H1 (cell line): ENCODE measurements at regions of chr15 and their contacts with region 1.

Region 1: GRCh38 chr15:101641166-101641764 is 10.9 kb downstream of the TM2D3 start:
- DNase-seq: peak in 1 of 2 experiments; percentile 85
- H3K4me3 ChIP-seq: no peak overlapping the region
- H3K27ac ChIP-seq: no peak overlapping the region
- H3K4me1 ChIP-seq: no peaks in the 10 kb centered on the region
- H3K27me3 ChIP-seq: no peaks in the 10 kb centered on the region
- CTCF ChIP-seq: peak in 2 of 3 experiments; percentile 75 to 79; a peak in 3 of 4 replicates
- EP300 ChIP-seq: no peak
- POLR2A ChIP-seq: no peak
- RAD21 ChIP-seq: peak; percentile 89 to 92

Region 2: GRCh38 chr15:101283931-101284330 is 357.3 kb before region 1 on chr15:
- CTCF ChIA-PET with region 1: interaction called, 18 read pairs
- POLR2A ChIA-PET with region 1: interaction called, 3 read pairs
- DNase-seq: no peak
- H3K4me3 ChIP-seq: no peak overlapping the region
- H3K27ac ChIP-seq: no peak overlapping the region
- H3K4me1 ChIP-seq: no peaks in the 10 kb centered on the region
- H3K27me3 ChIP-seq: no peaks in the 10 kb centered on the region
- CTCF ChIP-seq: no peak
- EP300 ChIP-seq: no peak
- POLR2A ChIP-seq: no peak
- RAD21 ChIP-seq: no peak

Region 3: GRCh38 chr15:101294731-101295606 is 346.3 kb before region 1 on chr15 and contains the start of gene SNRPA1:
- CTCF ChIA-PET with region 1: interaction called, 19 read pairs
- POLR2A ChIA-PET with region 1: interaction called, 4 read pairs
- DNase-seq: peak; percentile 66 to 96
- H3K4me3 ChIP-seq: peak within 1 kb of the TSS; percentile 93 to 98 (median 94)
- H3K27ac ChIP-seq: peak within 1 kb of the TSS; percentile 46
- H3K4me1 ChIP-seq: peaks cover 3 to 5% (median 4%) of the 10 kb centered on the region in 4 experiments; a peak in 4 of 7 replicates
- H3K27me3 ChIP-seq: no peaks in the 10 kb centered on the region
- CTCF ChIP-seq: no peak
- EP300 ChIP-seq: no peak
- POLR2A ChIP-seq: peak in 1 of 2 experiments; percentile 82; a peak in 2 of 3 replicates
- RAD21 ChIP-seq: no peak
- total RNA-seq, gene SNRPA1: 214 and 221 TPM in 2 replicates

Region 4: GRCh38 chr15:101320501-101321052 is 320.7 kb before region 1 on chr15:
- CTCF ChIA-PET with region 1: interaction called, 56 read pairs
- POLR2A ChIA-PET with region 1: no interaction called
- DNase-seq: peak in 1 of 2 experiments; percentile 71
- H3K4me3 ChIP-seq: no peak overlapping the region
- H3K27ac ChIP-seq: no peak overlapping the region
- H3K4me1 ChIP-seq: peaks cover 0 to 3% (median 0%) of the 10 kb centered on the region in 4 experiments; a peak in 1 of 7 replicates
- H3K27me3 ChIP-seq: no peaks in the 10 kb centered on the region; a peak in 1 of 7 replicates
- CTCF ChIP-seq: peak; percentile 67 to 81 (median 79)
- EP300 ChIP-seq: no peak
- POLR2A ChIP-seq: no peak
- RAD21 ChIP-seq: peak; percentile 46 to 64

Region 5: GRCh38 chr15:101501703-101502373 is 139.4 kb before region 1 on chr15:
- CTCF ChIA-PET with region 1: interaction called, 21 read pairs
- POLR2A ChIA-PET with region 1: no interaction called
- DNase-seq: peak; percentile 36 to 81
- H3K4me3 ChIP-seq: no peak overlapping the region
- H3K27ac ChIP-seq: no peak overlapping the region
- H3K4me1 ChIP-seq: peaks cover 0 to 10% (median 2%) of the 10 kb centered on the region in 4 experiments; a peak in 5 of 7 replicates
- H3K27me3 ChIP-seq: 0 out of 7 replicates have a peak, but pooled peaks cover 0 to 3% (median 0%) of the 10 kb centered on the region in 4 experiments
- CTCF ChIP-seq: peak; percentile 61 to 77 (median 70)
- EP300 ChIP-seq: no peak
- POLR2A ChIP-seq: no peak
- RAD21 ChIP-seq: peak; percentile 61 to 68

Region 6: GRCh38 chr15:101615986-101616848 is 25.0 kb before region 1 on chr15:
- CTCF ChIA-PET with region 1: interaction called, 70 read pairs
- POLR2A ChIA-PET with region 1: interaction called, 3 read pairs
- DNase-seq: peak; percentile 33 to 82
- H3K4me3 ChIP-seq: peak overlapping the region; percentile 27 to 54 (median 37); a peak in 6 of 8 replicates
- H3K27ac ChIP-seq: no peak overlapping the region
- H3K4me1 ChIP-seq: peaks cover 5 to 16% (median 11%) of the 10 kb centered on the region in 4 experiments
- H3K27me3 ChIP-seq: peaks cover 0 to 2% (median 0%) of the 10 kb centered on the region in 4 experiments; a peak in 3 of 7 replicates
- CTCF ChIP-seq: no peak
- EP300 ChIP-seq: no peak
- POLR2A ChIP-seq: no peak
- RAD21 ChIP-seq: no peak